PC-9 (cell line): ENCODE measurements at regions of chr9 and their contacts with region 1.

Region 1: GRCh38 chr9:91170951-91171350 is 190.8 kb downstream of the AUH start:
- DNase-seq: no peak
- H3K4me3 ChIP-seq: no peak overlapping the region
- H3K27ac ChIP-seq: no peak overlapping the region
- H3K4me1 ChIP-seq: peaks cover 15% of the 10 kb centered on the region
- H3K27me3 ChIP-seq: no peaks in the 10 kb centered on the region
- CTCF ChIP-seq: no peak

Region 2: DNA sequence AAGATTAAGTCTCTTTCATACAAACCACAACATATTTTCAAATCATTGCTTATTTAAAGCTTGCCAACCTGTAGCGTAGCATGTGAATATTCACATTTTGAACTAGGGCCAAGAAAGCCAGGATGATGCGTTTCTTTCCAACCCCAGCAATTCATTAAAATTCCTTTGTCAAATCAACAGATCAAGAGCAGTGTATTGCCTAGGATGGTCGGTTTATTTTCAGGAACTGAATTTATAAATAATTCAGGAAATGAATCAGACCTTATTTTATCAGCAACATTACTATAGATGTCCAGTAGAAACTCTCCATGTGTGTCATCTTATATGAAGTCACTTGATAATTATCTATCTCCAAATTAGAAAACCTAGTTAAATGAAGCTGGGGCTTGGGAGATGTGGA is 204.0 kb after region 1 on chr9:
- CTCF ChIA-PET with region 1: interaction called, 12 read pairs
- POLR2A ChIA-PET with region 1: no interaction called
- intact Hi-C with region 1: no loop called
- DNase-seq: no peak
- H3K4me3 ChIP-seq: no peak overlapping the region
- H3K27ac ChIP-seq: no peak overlapping the region
- H3K4me1 ChIP-seq: no peaks in the 10 kb centered on the region
- H3K27me3 ChIP-seq: no peaks in the 10 kb centered on the region
- CTCF ChIP-seq: no peak